Mammary epithelial cell (primary cell): ENCODE measurements at regions of chr1 and their contacts with region 1.

Region 1: GRCh38 chr1:64242895-64243756 is 39.7 kb downstream of the UBE2U start:
- DNase-seq: peak; percentile 31
- H3K4me3 ChIP-seq: no peak overlapping the region
- H3K27ac ChIP-seq: no peak overlapping the region
- H3K4me1 ChIP-seq: no peaks in the 10 kb centered on the region
- H3K27me3 ChIP-seq: no peaks in the 10 kb centered on the region
- CTCF ChIP-seq: peak; percentile 44 to 54

Region 2: DNA sequence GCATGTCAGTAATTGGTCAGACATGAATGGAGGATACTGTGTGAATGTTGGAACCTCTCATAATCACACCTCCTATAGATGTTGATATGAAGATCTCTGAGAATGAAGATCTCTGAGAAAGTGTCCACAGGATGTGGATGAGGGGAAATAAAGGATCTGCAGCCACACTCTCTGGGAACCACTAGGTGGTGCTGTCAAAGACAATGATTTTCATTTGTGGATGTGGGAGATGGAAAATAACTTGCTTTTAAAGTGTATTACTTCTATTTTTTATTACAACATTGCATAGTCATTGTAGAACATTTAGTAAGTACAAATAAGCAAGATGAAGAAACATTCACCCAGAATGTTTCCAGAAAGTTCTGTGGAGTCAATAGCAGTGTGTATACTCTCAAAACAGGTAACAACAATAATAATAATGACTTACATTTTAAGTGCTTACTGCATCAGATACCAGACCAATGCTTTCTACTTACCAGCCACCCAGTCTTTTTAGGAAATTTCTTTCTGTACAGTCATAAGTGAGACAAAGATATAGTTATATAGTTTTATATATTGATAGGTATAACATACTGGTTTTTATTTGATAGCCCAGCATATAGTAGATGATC is 1331.0 kb before region 1 on chr1:
- CTCF ChIA-PET with region 1: no interaction called
- dilution Hi-C with region 1: no loop called
- in situ Hi-C with region 1: no loop called
- intact Hi-C with region 1: loop called (anchors 5 kb)
- DNase-seq: peak; percentile 9
- H3K4me3 ChIP-seq: no peak overlapping the region
- H3K27ac ChIP-seq: no peak overlapping the region
- H3K4me1 ChIP-seq: no peaks in the 10 kb centered on the region
- H3K27me3 ChIP-seq: no peaks in the 10 kb centered on the region
- CTCF ChIP-seq: peak; percentile 80 to 92

Region 3: GRCh38 chr1:63557365-63557987 is 685.6 kb before region 1 on chr1:
- CTCF ChIA-PET with region 1: no interaction called
- dilution Hi-C with region 1: no loop called
- in situ Hi-C with region 1: no loop called
- intact Hi-C with region 1: loop called (anchors 5 kb)
- DNase-seq: peak; percentile 24
- H3K4me3 ChIP-seq: no peak overlapping the region
- H3K27ac ChIP-seq: no peak overlapping the region
- H3K4me1 ChIP-seq: no peaks in the 10 kb centered on the region
- H3K27me3 ChIP-seq: no peaks in the 10 kb centered on the region
- CTCF ChIP-seq: peak; percentile 56 to 77

Region 4: DNA sequence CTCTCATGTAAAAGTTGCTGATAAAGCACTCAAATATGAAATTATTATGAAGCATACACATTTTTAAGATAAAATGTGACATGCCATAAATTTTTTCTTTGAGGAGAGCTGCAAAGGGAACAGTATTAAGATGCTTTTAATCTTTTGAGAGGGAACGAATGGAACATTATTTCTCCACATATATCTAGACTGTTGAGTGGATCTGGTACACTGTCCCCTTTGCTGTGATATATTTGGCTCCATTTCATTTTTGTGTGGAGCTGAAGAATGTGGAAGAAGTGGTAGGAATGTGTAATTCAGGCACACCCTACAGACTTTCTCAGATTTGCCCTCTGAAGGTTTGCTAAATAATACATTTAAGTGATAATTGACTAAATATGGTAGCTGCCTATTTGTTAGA is 618.2 kb before region 1 on chr1:
- CTCF ChIA-PET with region 1: interaction called, 5 read pairs
- dilution Hi-C with region 1: no loop called
- in situ Hi-C with region 1: loop called in 1 of 2 experiments (anchors 10 kb)
- intact Hi-C with region 1: no loop called
- DNase-seq: no peak
- H3K4me3 ChIP-seq: no peak overlapping the region
- H3K27ac ChIP-seq: no peak overlapping the region
- H3K4me1 ChIP-seq: peaks cover 30% of the 10 kb centered on the region
- H3K27me3 ChIP-seq: no peaks in the 10 kb centered on the region
- CTCF ChIP-seq: peak; percentile 12 to 31

Region 5: DNA sequence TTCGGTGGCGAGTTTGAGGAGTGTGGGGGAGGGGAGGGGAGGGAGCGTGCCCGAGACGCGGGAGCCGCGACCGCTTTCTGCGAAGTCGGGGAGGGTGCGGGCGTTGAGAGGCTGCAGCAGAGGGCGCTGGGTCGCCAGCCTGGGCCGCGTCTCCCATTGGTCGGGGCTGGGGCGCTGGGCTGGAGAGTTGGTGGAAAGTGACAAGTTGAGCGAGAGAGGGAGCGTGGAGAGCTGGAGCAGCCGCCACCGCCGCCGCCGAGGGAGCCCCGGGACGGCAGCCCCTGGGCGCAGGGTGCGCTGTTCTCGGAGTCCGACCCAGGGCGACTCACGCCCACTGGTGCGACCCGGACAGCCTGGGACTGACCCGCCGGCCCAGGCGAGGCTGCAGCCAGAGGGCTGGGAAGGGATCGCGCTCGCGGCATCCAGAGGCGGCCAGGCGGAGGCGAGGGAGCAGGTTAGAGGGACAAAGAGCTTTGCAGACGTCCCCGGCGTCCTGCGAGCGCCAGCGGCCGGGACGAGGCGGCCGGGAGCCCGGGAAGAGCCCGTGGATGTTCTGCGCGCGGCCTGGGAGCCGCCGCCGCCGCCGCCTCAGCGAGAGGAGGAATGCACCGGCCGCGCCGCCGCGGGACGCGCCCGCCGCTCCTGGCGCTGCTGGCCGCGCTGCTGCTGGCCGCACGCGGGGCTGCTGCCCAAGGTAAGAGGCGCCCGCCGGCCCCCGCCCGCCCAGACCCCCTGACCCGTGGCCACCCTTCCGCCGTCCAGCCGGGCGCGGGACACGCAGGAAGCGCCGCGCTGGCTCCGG is 469.1 kb before region 1 on chr1 and contains the start of gene ROR1:
- CTCF ChIA-PET with region 1: no interaction called
- dilution Hi-C with region 1: no loop called
- in situ Hi-C with region 1: no loop called
- intact Hi-C with region 1: loop called (anchors 1 kb)
- DNase-seq: peak; percentile 82
- H3K4me3 ChIP-seq: peak within 1 kb of the TSS; percentile 87 to 93 (median 90)
- H3K27ac ChIP-seq: peak within 1 kb of the TSS; percentile 48
- H3K4me1 ChIP-seq: peaks cover 29% of the 10 kb centered on the region
- H3K27me3 ChIP-seq: no peaks in the 10 kb centered on the region
- CTCF ChIP-seq: peak; percentile 23 to 84
- total RNA-seq, gene ROR1: 11.5 to 21.8 TPM

Region 6: GRCh38 chr1:64136752-64137411 is 106.2 kb before region 1 on chr1:
- CTCF ChIA-PET with region 1: no interaction called
- dilution Hi-C with region 1: no loop called
- in situ Hi-C with region 1: no loop called
- intact Hi-C with region 1: loop called (anchors 2 kb)
- DNase-seq: peak; percentile 74
- H3K4me3 ChIP-seq: no peak overlapping the region
- H3K27ac ChIP-seq: peak overlapping the region; percentile 25
- H3K4me1 ChIP-seq: peaks cover 33% of the 10 kb centered on the region
- H3K27me3 ChIP-seq: no peaks in the 10 kb centered on the region
- CTCF ChIP-seq: peak; percentile 90 to 92

Region 7: DNA sequence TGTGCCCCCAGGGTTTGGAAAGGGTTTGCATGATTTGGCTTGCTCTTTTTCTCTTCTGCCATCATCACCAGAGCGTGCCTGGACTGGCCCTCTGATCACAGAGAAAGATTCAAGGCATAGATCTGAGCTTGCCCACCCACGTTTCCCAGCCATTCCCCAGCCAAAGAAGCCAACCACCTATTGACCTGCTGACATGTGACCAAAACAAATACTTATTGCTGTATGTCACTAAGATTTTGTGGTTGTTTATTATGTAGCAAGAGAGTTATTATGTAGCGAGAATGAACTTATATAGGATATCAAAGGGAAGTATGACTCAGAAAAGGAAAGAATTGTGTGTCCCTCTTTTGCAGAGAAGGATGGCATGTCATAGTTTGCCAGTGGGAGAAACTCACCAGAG is 20.2 kb after region 1 on chr1:
- CTCF ChIA-PET with region 1: no interaction called
- dilution Hi-C with region 1: no loop called
- in situ Hi-C with region 1: no loop called
- intact Hi-C with region 1: no loop called
- DNase-seq: peak; percentile 98
- H3K4me3 ChIP-seq: no peak overlapping the region
- H3K27ac ChIP-seq: peak overlapping the region; percentile 63
- H3K4me1 ChIP-seq: peaks cover 19% of the 10 kb centered on the region
- H3K27me3 ChIP-seq: no peaks in the 10 kb centered on the region
- CTCF ChIP-seq: no peak